CD8-positive, alpha-beta T cell (primary cell): ENCODE measurements at regions of chr5 and their contacts with region 1.

Region 1: GRCh38 chr5:10563945-10564837 is at the start of gene ANKRD33B:
- DNase-seq: peak; percentile 52 to 88 (median 74)
- ATAC-seq: peak; percentile 89
- H3K4me3 ChIP-seq: peak within 1 kb of the TSS; percentile 57 to 70
- H3K4me3 Mint-ChIP-seq: peak within 1 kb of the TSS; percentile 83
- H3K27ac ChIP-seq: no peak within 1 kb of the TSS
- H3K27ac Mint-ChIP-seq: no peak within 1 kb of the TSS
- H3K4me1 ChIP-seq: peaks cover 16% of the 10 kb centered on the region
- H3K4me1 Mint-ChIP-seq: peaks cover 14% of the 10 kb centered on the region
- H3K27me3 ChIP-seq: peaks cover 0 to 12% of the 10 kb centered on the region in 2 experiments
- H3K27me3 Mint-ChIP-seq: peaks cover 7% of the 10 kb centered on the region
- CTCF ChIP-seq: no peak
- total RNA-seq, gene ANKRD33B: 1.3 to 1.4 TPM

Region 2: GRCh38 chr5:10249948-10250803 is 314.0 kb before region 1 on chr5 and contains the start of gene CCT5:
- CTCF ChIA-PET with region 1: no interaction called
- POLR2A ChIA-PET with region 1: no interaction called
- intact Hi-C with region 1: loop called (anchors 5 to 10 kb)
- DNase-seq: peak; percentile 78 to 99 (median 89)
- ATAC-seq: peak; percentile 81
- H3K4me3 ChIP-seq: peak within 1 kb of the TSS; percentile 85 to 99
- H3K4me3 Mint-ChIP-seq: peak within 1 kb of the TSS; percentile 94
- H3K27ac ChIP-seq: peak within 1 kb of the TSS; percentile 91 to 97
- H3K27ac Mint-ChIP-seq: peak within 1 kb of the TSS; percentile 99
- H3K4me1 ChIP-seq: peaks cover 34% of the 10 kb centered on the region
- H3K4me1 Mint-ChIP-seq: peaks cover 49% of the 10 kb centered on the region
- H3K27me3 ChIP-seq: no peaks in the 10 kb centered on the region
- H3K27me3 Mint-ChIP-seq: no peaks in the 10 kb centered on the region
- CTCF ChIP-seq: no peak
- total RNA-seq, gene CCT5: 38.1 to 41.0 TPM